H1 (cell line): ENCODE measurements at regions of chr2 and their contacts with region 1.

Region 1: GRCh38 chr2:152019732-152020131 is 79.1 kb downstream of the CACNB4 start:
- DNase-seq: no peak
- H3K4me3 ChIP-seq: no peak overlapping the region
- H3K27ac ChIP-seq: no peak overlapping the region
- H3K4me1 ChIP-seq: no peaks in the 10 kb centered on the region
- H3K27me3 ChIP-seq: no peaks in the 10 kb centered on the region
- CTCF ChIP-seq: no peak
- EP300 ChIP-seq: no peak
- POLR2A ChIP-seq: no peak
- RAD21 ChIP-seq: no peak

Region 2: DNA sequence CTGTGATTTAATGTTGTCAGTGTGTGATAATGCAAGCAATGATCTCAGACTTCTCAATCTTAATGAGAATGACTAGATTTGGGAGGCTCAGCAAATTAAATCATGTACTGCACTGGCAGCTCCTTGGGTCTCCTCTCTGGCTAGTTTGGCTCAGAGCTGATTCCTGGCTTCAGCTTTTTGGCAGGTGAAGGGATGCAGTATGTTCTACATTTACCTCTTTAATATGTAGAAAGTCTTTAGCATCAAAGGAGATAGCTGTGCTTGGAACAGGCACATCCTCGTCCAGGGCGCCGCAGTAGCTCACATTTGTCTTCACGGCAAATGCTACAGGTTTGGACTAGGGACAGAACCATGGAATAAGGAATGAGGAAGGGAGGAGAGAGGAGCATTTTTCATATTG is 139.1 kb before region 1 on chr2:
- CTCF ChIA-PET with region 1: no interaction called
- POLR2A ChIA-PET with region 1: no interaction called
- DNase-seq: no peak
- H3K4me3 ChIP-seq: no peak overlapping the region
- H3K27ac ChIP-seq: no peak overlapping the region
- H3K4me1 ChIP-seq: 0 out of 7 replicates have a peak, but pooled peaks cover 0 to 4% (median 0%) of the 10 kb centered on the region in 4 experiments
- H3K27me3 ChIP-seq: no peaks in the 10 kb centered on the region
- CTCF ChIP-seq: no peak
- EP300 ChIP-seq: no peak
- POLR2A ChIP-seq: no peak
- RAD21 ChIP-seq: no peak

Region 3: GRCh38 chr2:152005607-152006006 is 14.1 kb before region 1 on chr2:
- CTCF ChIA-PET with region 1: interaction called, 101 read pairs
- POLR2A ChIA-PET with region 1: no interaction called
- DNase-seq: no peak
- H3K4me3 ChIP-seq: no peak overlapping the region
- H3K27ac ChIP-seq: no peak overlapping the region
- H3K4me1 ChIP-seq: peaks cover 0 to 11% (median 5%) of the 10 kb centered on the region in 4 experiments; a peak in 5 of 7 replicates
- H3K27me3 ChIP-seq: no peaks in the 10 kb centered on the region; a peak in 1 of 7 replicates
- CTCF ChIP-seq: no peak
- EP300 ChIP-seq: no peak
- POLR2A ChIP-seq: no peak
- RAD21 ChIP-seq: no peak